Adrenal gland (tissue), 19 donors: ENCODE measurements at regions of chr12 and their contacts with region 1.

Region 1: GRCh38 chr12:7018350-7019042 is at the start of gene LPCAT3:
- DNase-seq: peak; percentile 98 to 99 (median 98)
- H3K4me3 ChIP-seq: peak within 1 kb of the TSS; percentile 56 to 96 (median 88)
- H3K27ac ChIP-seq: peak within 1 kb of the TSS; percentile 89 to 100 (median 92)
- H3K4me1 ChIP-seq: peaks cover 9 to 29% of the 10 kb centered on the region in 2 donors
- H3K27me3 ChIP-seq: no peaks in the 10 kb centered on the region
- CTCF ChIP-seq: peak; percentile 61 to 90 (median 82)
- POLR2A ChIP-seq: peak; percentile 67 to 69
- total RNA-seq, gene LPCAT3: 28.5 to 146 (median 79.8) TPM

Region 2: DNA sequence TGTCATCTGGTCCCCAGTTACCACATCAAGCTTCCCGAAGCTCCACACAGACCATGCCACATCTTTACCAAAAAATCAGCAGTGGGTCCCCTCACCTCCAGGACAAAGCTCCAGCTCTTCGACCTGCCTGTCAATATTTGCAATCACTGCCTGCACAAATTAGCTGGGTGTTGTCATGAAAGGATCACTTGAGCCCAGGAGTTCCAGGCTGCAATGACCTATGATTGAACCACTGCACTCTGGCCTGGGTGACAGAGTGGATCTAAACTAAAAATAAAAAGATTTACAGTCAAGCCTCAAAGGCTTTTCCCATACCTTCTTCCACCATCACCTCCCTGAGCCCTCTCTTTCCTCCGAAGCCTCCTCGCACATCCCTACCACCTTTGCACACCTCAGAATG is 221.9 kb before region 1 on chr12:
- intact Hi-C with region 1: no loop called
- DNase-seq: no peak
- H3K4me3 ChIP-seq: no peak overlapping the region
- H3K27ac ChIP-seq: no peak overlapping the region
- H3K4me1 ChIP-seq: no peaks in the 10 kb centered on the region
- H3K27me3 ChIP-seq: peaks cover 13% of the 10 kb centered on the region
- CTCF ChIP-seq: no peak
- POLR2A ChIP-seq: no peak

Region 3: DNA sequence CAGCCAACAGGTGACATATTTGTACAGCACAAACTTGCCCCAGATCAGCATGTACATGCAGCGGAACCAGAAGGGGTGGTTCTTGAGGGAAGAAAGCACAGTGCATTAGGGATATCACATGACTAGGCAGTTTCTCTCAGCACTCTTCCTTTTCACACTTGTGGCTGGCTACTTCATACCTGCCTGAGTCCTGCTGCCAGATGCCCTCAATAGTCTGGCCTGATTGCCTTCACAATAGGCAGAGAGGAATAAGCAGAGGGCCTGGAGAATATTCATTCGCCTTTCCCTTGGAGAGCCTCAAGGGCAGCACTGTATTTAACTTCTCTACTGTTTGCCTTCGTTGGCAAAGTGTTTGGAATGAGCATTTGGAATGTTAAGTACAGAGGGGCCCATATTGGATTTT is 39.9 kb before region 1 on chr12:
- intact Hi-C with region 1: loop called in 1 of 2 experiments (anchors 5 kb)
- DNase-seq: no peak
- H3K4me3 ChIP-seq: no peak overlapping the region
- H3K27ac ChIP-seq: no peak overlapping the region
- H3K4me1 ChIP-seq: peaks cover 7 to 10% of the 10 kb centered on the region in 2 donors
- H3K27me3 ChIP-seq: no peaks in the 10 kb centered on the region
- CTCF ChIP-seq: no peak
- POLR2A ChIP-seq: no peak